ENCODE measurements at regions of chr3 and their contacts with region 1.

Region 1: DNA sequence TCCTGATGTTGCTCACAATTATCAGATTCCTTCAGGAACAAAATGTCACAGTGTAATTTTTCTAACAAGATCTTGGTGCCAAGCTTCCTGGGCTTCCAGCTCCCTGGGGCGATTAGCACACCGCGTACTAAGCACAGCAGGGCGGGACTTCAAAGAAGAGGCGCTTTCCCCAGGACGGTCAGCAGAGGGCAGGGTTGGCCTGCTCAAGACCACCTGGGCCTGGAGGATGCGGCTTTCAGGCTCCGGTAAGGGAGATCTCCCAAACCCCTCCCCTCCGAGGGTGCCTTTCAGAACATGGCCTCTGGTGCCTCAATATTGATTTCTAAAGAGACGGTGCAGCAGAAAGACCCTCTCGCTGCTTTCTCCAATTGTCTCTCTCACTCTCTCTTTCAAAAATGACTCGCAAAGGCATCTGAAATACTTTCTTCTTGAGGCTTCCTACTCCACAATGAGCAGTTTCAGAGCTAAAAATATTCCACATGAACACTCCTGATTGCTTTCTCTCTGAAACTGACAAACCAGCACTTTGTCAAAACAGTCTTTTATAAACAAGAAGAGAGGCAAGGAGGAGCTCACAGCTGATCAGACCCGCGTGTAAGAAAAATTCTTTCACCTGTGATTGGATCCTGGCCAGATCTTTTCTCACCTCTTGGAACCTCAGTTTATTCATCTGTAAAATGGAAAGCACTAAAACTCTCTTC is 154.0 kb downstream of the ADAMTS9 start:
- DNase-seq: peak; percentile 80
- H3K4me3 ChIP-seq: no peak overlapping the region
- H3K27ac ChIP-seq: no peak overlapping the region
- H3K27me3 ChIP-seq: peaks cover 19% of the 10 kb centered on the region
- CTCF ChIP-seq: peak; percentile 91

Region 2: DNA sequence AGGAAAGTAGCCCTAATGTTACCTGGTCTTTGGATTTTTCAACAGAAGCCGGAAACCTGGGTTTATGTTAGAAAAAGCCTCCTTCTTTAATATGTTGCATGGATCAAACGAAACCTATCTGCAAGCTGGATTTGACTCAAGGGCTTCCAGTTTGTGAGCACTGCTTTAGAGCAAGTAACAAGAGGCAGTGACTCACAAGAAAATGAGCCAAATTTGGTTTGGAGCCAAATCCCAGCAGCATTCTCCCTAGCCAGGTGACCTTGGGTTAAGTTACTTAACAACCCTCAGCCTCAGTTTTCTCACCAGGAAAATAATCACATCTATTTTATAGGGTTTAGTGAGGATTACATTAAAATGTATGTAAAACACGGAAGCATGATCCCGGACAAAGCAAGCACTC is 93.3 kb before region 1 on chr3:
- CTCF ChIA-PET with region 1: no interaction called
- POLR2A ChIA-PET with region 1: no interaction called
- DNase-seq: no peak
- H3K4me3 ChIP-seq: no peak overlapping the region
- H3K27ac ChIP-seq: no peak overlapping the region
- H3K27me3 ChIP-seq: no peaks in the 10 kb centered on the region
- CTCF ChIP-seq: no peak

Region 3: GRCh38 chr3:64501298-64501906 is 32.4 kb before region 1 on chr3:
- CTCF ChIA-PET with region 1: interaction called, 19 read pairs
- POLR2A ChIA-PET with region 1: no interaction called
- DNase-seq: peak; percentile 96
- H3K4me3 ChIP-seq: no peak overlapping the region
- H3K27ac ChIP-seq: peak overlapping the region; percentile 96
- H3K27me3 ChIP-seq: no peaks in the 10 kb centered on the region
- CTCF ChIP-seq: no peak

Region 4: GRCh38 chr3:64548200-64548889 is 14.6 kb after region 1 on chr3:
- CTCF ChIA-PET with region 1: interaction called, 18 read pairs
- POLR2A ChIA-PET with region 1: no interaction called
- DNase-seq: peak; percentile 38
- H3K4me3 ChIP-seq: no peak overlapping the region
- H3K27ac ChIP-seq: peak overlapping the region; percentile 21
- H3K27me3 ChIP-seq: peaks cover 19% of the 10 kb centered on the region
- CTCF ChIP-seq: no peak

Region 5: GRCh38 chr3:64796607-64797399 is 263.0 kb after region 1 on chr3:
- CTCF ChIA-PET with region 1: no interaction called
- POLR2A ChIA-PET with region 1: no interaction called
- DNase-seq: no peak
- H3K4me3 ChIP-seq: no peak overlapping the region
- H3K27ac ChIP-seq: no peak overlapping the region
- H3K27me3 ChIP-seq: no peaks in the 10 kb centered on the region
- CTCF ChIP-seq: no peak

Region 6: DNA sequence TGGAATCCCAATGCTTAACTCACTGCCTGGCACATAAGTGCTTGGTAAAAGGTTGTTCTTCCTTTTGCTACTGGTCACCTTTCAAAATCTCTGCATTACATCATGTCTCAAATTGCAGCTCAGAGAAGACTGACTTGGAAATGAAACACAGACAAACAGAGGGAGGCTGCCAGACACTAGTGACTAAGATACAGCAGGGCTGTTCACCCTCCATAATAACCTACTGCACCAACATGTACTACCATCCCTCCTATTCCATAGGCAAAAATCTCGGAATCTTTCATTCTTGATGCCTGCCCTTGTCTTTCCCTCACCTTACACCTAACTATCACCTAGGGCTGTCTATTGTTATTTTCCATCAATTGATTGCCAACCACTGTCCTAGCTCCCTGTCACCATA is 656.3 kb after region 1 on chr3:
- CTCF ChIA-PET with region 1: interaction called, 11 read pairs
- POLR2A ChIA-PET with region 1: no interaction called
- DNase-seq: no peak
- H3K4me3 ChIP-seq: no peak overlapping the region
- H3K27ac ChIP-seq: no peak overlapping the region
- H3K27me3 ChIP-seq: no peaks in the 10 kb centered on the region
- CTCF ChIP-seq: no peak

Region 7: DNA sequence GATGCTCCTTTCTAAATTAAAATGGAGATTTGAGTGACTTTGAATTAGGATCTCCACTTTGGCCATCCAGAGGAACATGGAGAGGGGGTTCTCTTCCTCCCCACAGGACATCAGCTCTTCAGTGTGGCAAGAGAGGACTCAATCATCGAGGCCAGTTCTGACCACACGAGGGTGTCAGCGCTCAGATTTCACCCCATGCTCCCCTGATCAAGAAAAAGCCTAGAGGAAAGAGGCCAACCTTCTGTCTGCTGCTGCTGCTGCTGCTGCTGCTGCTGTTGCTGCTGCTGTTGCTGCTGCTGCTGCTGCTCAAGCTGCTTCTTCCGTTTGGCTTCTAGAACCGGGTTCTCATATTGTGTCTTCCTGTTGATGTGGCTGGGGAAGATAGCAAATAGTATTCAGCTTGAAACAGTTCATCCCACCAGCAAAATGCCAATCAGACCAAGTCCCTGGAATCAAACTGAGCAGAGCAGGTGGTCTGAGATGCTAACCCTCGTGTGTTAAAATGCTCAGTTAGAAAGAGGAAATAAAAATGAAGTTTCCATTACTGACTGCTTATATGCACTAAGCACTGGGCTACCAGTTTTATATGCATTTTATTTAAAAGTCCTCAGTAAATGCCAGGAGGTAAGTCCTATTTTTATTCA is 906.0 kb after region 1 on chr3:
- CTCF ChIA-PET with region 1: interaction called, 22 read pairs
- POLR2A ChIA-PET with region 1: no interaction called
- DNase-seq: peak; percentile 49
- H3K4me3 ChIP-seq: no peak overlapping the region
- H3K27ac ChIP-seq: no peak overlapping the region
- H3K27me3 ChIP-seq: no peaks in the 10 kb centered on the region
- CTCF ChIP-seq: peak; percentile 81